Sigmoid colon (tissue), 7 donors: ENCODE measurements at regions of chr17 and their contacts with region 1.

Region 1: DNA sequence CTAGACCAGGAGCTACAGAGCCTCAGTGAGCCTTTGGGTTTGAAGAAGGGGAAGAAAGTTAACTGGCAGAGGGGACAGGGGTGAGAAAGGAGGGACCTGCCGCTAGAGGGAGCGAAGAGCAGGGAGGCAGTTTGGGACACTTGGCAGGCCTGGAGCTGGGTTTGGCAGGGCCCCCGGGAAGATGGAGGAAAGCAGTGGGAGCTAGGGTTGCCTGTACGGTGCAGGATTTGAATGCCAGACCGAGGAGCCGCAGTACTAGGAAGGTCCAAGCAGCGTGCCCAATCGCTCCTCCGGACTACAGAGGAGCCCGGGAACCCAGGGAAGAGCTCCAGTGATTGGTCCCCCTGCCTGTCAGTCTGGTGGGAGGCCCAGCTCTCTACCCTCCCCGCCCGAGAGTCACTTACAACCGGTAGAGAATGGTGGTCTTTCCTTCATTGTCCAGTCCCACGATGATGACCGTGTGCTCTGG is 1.3 kb downstream of the ARL5C start:
- DNase-seq: peak; percentile 98
- H3K4me3 ChIP-seq: peak overlapping the region; percentile 35 to 62 (median 50)
- H3K27ac ChIP-seq: peak overlapping the region; percentile 35 to 64 (median 55)
- H3K4me1 ChIP-seq: peaks cover 0 to 25% (median 16%) of the 10 kb centered on the region in 4 donors
- H3K27me3 ChIP-seq: no peaks in the 10 kb centered on the region
- CTCF ChIP-seq: peak; percentile 79 to 91 (median 83)
- EP300 ChIP-seq: no peak
- POLR2A ChIP-seq: no peak

Region 2: DNA sequence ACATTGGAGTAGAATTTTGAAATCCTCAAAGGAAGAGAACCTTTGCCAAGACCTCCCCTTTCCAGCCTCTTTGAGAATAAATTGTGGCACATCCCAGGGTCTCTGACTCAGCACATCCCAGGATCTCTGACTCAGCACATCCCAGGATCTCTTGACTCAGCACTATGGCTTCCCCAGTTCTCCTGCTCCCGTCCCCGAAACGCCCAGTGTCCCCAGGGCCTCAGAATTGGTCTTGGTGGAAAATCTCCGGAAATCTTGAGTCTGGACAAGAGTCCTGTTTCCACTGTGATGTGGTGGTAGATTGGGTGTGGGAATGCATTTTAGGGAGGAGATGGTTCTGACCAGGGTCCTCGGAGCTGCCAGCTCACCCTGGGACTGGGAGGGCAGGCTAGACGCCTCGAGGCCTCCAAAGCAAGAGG is 32.5 kb before region 1 on chr17:
- intact Hi-C with region 1: no loop called
- DNase-seq: peak; percentile 78
- H3K4me3 ChIP-seq: no peak overlapping the region
- H3K27ac ChIP-seq: peak overlapping the region in 2 of 4 donors; percentile 37 to 49
- H3K4me1 ChIP-seq: no peaks in the 10 kb centered on the region
- H3K27me3 ChIP-seq: no peaks in the 10 kb centered on the region
- CTCF ChIP-seq: no peak
- EP300 ChIP-seq: no peak
- POLR2A ChIP-seq: no peak

Region 3: DNA sequence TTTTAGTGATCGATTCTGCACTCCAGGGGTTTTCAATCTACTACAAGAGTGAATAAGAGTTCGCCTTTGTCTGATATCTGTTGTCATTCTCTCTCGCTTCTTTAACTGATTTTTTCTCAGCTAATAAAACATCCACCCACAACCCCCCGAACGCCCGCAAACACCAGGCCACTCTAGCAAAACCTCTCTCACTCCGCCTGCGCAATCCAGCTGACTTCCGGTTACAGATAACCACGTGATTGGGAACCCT is 35.0 kb after region 1 on chr17:
- intact Hi-C with region 1: loop called (anchors 1 kb)
- DNase-seq: peak; percentile 97
- H3K4me3 ChIP-seq: peak overlapping the region; percentile 82 to 96 (median 88)
- H3K27ac ChIP-seq: peak overlapping the region; percentile 91 to 99 (median 94)
- H3K4me1 ChIP-seq: peaks cover 0 to 64% (median 54%) of the 10 kb centered on the region in 4 donors
- H3K27me3 ChIP-seq: no peaks in the 10 kb centered on the region
- CTCF ChIP-seq: no peak
- EP300 ChIP-seq: no peak
- POLR2A ChIP-seq: no peak

Region 4: GRCh38 chr17:39231591-39232551 is 67.2 kb after region 1 on chr17:
- intact Hi-C with region 1: loop called (anchors 5 kb)
- DNase-seq: peak; percentile 74
- H3K4me3 ChIP-seq: peak overlapping the region in 1 of 4 donors; percentile 1
- H3K27ac ChIP-seq: no peak overlapping the region
- H3K4me1 ChIP-seq: peaks cover 0 to 13% (median 10%) of the 10 kb centered on the region in 4 donors
- H3K27me3 ChIP-seq: peaks cover 9 to 81% (median 37%) of the 10 kb centered on the region in 3 donors
- CTCF ChIP-seq: peak; percentile 51 to 84 (median 64)
- EP300 ChIP-seq: no peak
- POLR2A ChIP-seq: no peak